Sigmoid colon (tissue), 7 donors: ENCODE measurements at regions of chr1 and their contacts with region 1.

Region 1: GRCh38 chr1:25566730-25567341 is 23.4 kb downstream of the LDLRAP1 start:
- DNase-seq: peak; percentile 89
- H3K4me3 ChIP-seq: peak overlapping the region in 2 of 4 donors; percentile 4 to 9
- H3K27ac ChIP-seq: peak overlapping the region; percentile 76 to 91 (median 86)
- H3K4me1 ChIP-seq: peaks cover 0 to 55% (median 41%) of the 10 kb centered on the region in 4 donors
- H3K27me3 ChIP-seq: no peaks in the 10 kb centered on the region
- CTCF ChIP-seq: no peak
- EP300 ChIP-seq: no peak
- POLR2A ChIP-seq: no peak

Region 2: DNA sequence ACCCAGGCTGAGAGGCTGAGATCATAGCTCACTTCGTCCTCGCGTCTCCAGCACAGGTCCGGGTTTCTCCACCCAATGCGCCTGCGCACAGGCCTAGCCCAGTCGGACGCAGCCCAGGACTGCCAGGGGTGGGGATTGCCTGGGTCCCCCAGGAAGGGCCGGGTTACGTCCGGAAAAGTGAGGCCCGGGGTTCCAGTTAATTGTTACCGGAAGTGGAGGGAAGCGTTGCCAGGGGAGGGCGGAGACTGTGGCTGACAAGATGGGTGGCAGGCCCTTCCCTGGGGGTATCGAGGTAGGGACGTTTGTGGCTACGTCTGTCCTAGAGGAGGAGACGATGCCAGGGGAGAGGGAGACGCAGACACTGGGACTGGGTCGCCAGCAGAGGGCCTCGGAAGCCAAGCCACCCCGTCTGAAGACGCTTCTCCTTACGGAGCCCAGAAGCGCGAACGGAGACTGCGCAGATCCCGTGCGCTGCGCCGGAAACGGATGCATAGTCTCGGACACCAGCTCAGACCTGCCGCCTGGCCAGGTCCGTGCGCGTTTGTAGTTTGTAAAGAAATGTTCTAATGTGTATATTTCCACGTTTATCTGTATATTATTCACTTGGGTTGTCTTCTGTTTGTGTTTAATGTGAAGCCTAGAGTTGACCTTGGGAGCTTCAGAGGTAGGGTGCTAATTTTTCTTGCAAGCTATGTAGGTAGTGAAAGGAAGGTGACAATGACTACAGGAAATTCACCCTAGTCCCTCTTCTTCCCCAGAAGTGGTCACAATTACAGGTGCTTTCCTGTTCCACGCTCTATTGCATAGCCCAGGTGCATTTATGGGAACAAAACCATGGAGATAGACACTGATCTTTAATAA is 326.9 kb before region 1 on chr1:
- intact Hi-C with region 1: no loop called
- DNase-seq: peak; percentile 97
- H3K4me3 ChIP-seq: peak overlapping the region; percentile 24 to 54 (median 50)
- H3K27ac ChIP-seq: peak overlapping the region; percentile 90 to 92 (median 90)
- H3K4me1 ChIP-seq: peaks cover 0 to 47% (median 28%) of the 10 kb centered on the region in 4 donors
- H3K27me3 ChIP-seq: no peaks in the 10 kb centered on the region
- CTCF ChIP-seq: peak in 3 of 4 experiments; percentile 33 to 52 (median 49)
- EP300 ChIP-seq: peak in 1 of 4 donors; percentile 24
- POLR2A ChIP-seq: peak in 1 of 2 donors; percentile 7

Region 3: DNA sequence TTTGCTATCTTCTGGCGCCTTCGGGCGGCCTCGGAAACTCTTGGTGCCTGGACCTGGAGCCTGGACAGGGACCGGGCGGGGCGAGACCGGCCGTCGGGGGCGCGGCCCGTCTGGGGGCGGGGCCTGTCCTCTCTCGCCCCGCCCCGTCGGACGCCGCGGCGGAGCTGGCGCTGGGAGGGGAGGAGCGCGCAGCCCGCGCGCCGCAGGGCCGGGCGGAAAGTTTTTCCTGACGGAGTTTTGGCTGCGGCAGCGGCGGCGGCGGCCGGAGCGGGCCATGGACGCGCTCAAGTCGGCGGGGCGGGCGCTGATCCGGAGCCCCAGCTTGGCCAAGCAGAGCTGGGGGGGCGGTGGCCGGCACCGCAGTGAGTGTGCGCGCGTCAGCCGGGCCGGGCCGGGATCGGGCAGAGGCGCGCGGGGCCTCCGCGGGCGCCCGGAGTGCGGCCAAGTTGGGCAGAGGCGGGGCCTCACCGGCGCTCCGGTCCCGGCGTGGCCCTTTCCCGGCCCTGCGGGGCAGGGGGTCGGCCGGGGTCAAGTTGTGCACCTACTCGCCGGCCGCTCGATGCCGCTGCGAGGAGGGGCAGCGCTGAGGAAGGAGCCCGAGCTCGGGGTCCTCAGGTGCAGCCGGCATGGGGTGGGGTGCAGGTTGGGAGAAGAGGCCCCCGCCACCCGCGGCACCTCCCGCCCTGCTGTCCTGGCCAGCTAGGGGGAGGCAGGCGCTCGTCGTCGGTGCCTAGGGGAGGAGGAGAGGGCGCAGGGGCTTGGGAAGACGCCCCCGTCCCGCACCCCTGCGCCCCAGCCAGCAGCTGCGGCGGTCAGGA is 23.2 kb before region 1 on chr1 and contains the start of gene LDLRAP1:
- intact Hi-C with region 1: loop called (anchors 2 kb)
- DNase-seq: peak; percentile 88
- H3K4me3 ChIP-seq: peak within 1 kb of the TSS; percentile 77 to 95 (median 82)
- H3K27ac ChIP-seq: peak within 1 kb of the TSS; percentile 84 to 92 (median 88)
- H3K4me1 ChIP-seq: peaks cover 0 to 25% (median 20%) of the 10 kb centered on the region in 4 donors
- H3K27me3 ChIP-seq: no peaks in the 10 kb centered on the region
- CTCF ChIP-seq: no peak
- EP300 ChIP-seq: no peak
- POLR2A ChIP-seq: no peak
- total RNA-seq, gene LDLRAP1: 9.1 to 17.4 (median 10.3) TPM